ENCODE measurements at regions of chr7 and their contacts with region 1.

Region 1: GRCh38 chr7:35801392-35802101 is 690 bp downstream of the SEPTIN7 start:
- DNase-seq: peak; percentile 83
- ATAC-seq: peak; percentile 43 to 71

Region 2: DNA sequence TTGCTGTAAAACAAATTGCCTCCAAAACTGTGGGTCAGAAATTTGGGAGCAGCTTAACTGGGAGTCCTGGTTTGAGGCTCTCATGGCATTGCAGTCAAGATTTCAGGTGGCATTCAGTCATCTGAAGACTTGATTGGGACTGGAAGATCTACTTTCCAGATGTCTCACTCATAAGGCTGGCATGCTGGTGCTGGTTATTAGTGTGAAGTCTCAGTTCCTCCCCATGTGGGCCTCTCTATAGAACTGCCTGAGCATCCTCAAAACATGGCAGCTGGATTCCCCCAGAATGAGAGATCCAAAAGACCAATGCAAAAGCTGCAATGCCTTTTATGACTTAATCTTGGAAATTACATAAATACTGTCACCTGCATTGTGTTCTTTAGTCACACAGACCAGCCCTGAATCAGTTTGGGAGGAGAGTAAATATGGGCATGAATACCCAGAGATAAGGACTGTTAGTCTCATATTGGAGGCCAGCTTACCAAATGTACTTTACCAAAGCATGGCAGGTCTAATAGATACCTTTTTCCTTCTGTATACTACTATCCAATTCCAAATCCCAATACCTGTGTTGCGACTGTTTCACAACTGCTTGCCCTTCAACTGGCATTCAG is 100.2 kb before region 1 on chr7:
- intact Hi-C with region 1: loop called in 1 of 2 experiments (anchors 10 kb)
- DNase-seq: no peak
- ATAC-seq: no peak

Region 3: GRCh38 chr7:35716038-35716803 is 85.3 kb before region 1 on chr7:
- intact Hi-C with region 1: loop called in 1 of 2 experiments (anchors 5 kb)
- DNase-seq: peak; percentile 34
- ATAC-seq: peak; percentile 78 to 81

Region 4: GRCh38 chr7:35869810-35870209 is 68.3 kb after region 1 on chr7:
- intact Hi-C with region 1: loop called in 1 of 2 experiments (anchors 10 kb)
- DNase-seq: no peak
- ATAC-seq: peak in 1 of 2 donors; percentile 51

Region 5: GRCh38 chr7:35906191-35906908 is 104.8 kb after region 1 on chr7:
- intact Hi-C with region 1: loop called in 1 of 2 experiments (anchors 10 kb)
- DNase-seq: peak; percentile 28
- ATAC-seq: peak; percentile 88 to 89

Region 6: GRCh38 chr7:35985126-35985754 is 183.7 kb after region 1 on chr7:
- intact Hi-C with region 1: no loop called
- DNase-seq: peak; percentile 85
- ATAC-seq: peak; percentile 97 to 99

Region 7: GRCh38 chr7:36057323-36057722 is 255.8 kb after region 1 on chr7:
- intact Hi-C with region 1: no loop called
- DNase-seq: no peak
- ATAC-seq: no peak